ENCODE measurements at regions of chr6 and their contacts with region 1.

Region 1: DNA sequence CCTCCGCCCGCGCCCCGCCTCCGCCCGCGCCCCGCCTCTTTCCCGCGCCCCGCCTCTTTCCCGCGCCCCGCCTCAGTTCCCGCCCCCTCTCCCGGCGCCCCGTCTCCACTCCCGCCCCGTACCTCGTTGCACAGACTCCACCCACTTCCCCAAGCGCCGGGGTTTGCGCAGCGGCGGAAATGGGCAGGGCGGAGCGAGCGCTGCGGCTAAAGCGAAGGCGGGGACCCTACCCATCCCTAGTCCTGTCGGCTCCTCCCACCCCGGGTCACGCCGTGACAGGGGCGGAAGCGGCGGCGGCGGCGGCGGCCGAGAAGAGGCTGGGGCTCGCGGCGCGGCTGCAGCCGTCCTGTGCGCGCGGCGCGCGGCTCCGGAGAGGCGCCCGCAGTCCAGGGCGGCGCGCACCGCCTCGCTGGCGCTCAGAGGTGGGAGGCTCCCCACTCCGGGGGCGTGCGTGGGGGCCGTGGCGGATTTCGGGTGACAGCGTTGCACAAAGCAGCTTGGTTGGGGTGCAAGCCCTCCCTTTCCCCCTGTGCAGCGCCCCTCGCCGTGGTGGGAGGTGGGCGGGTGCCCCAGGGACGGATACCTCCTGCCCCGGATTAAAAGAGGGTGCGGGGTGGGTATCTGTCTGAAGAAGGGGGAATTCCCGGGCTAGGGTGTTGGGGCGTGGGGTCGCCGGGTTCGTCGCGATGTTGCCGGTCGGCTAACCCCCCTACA is at the start of gene KDM1B:
- DNase-seq: peak; percentile 98
- H3K4me3 ChIP-seq: peak within 1 kb of the TSS; percentile 98
- H3K4me3 Mint-ChIP-seq: peak within 1 kb of the TSS; percentile 99
- H3K27ac Mint-ChIP-seq: peak within 1 kb of the TSS; percentile 99
- H3K4me1 ChIP-seq: no peaks in the 10 kb centered on the region
- H3K4me1 Mint-ChIP-seq: no peaks in the 10 kb centered on the region
- H3K27me3 ChIP-seq: no peaks in the 10 kb centered on the region
- H3K27me3 Mint-ChIP-seq: no peaks in the 10 kb centered on the region
- CTCF ChIP-seq: no peak
- total RNA-seq, gene KDM1B: 9.5 and 10.6 TPM in 2 replicates

Region 2: DNA sequence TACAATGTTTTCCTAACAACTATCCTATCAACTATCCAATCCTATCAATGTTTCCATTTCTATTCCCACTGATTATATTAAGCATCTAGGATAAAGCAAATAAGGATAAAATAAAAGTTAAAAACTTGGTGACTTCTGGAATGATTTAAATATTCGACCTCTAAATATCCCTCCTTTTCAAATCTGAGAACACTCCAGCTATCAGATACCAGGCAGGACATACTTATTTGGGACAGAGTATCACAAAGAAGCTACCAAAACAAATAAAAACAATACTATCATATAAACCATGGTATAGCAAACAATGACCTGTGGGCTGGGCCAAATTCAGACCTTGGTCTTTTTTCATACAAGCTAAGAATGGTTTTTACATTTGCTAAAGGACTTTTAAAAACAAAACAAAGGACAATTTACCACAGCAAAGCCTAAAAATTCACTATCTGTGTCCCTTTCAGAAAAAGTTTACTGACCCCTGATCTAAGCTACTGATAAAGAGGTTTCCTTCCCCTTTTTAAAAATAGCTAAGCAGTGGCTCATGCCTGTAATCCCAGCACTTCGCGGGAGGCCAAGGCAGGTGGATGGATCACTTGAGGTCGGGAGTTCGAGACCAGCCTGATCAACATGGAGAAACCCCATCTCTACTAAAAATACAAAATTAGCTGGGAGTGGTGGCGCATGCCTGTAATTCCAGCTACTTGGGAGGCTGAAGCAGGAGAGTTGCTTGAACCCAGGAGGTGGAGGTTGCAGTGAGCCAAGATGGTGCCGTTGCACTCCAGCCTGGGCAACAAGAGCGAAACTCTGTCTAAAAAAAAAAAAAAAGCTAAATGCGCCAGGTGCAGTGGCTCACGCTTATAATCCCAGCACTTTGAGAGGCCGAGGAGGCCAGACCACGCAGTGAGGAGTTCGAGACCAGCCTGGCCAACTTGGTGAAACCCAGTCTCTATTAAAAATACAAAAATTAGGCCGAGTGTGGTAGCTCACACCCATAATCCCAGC is 454.6 kb before region 1 on chr6:
- CTCF ChIA-PET with region 1: no interaction called
- POLR2A ChIA-PET with region 1: no interaction called
- intact Hi-C with region 1: no loop called
- DNase-seq: no peak
- H3K4me3 ChIP-seq: no peak overlapping the region
- H3K4me3 Mint-ChIP-seq: no peak overlapping the region
- H3K27ac Mint-ChIP-seq: no peak overlapping the region
- H3K4me1 ChIP-seq: peaks cover 19% of the 10 kb centered on the region
- H3K4me1 Mint-ChIP-seq: no peaks in the 10 kb centered on the region
- H3K27me3 ChIP-seq: no peaks in the 10 kb centered on the region
- H3K27me3 Mint-ChIP-seq: no peaks in the 10 kb centered on the region
- CTCF ChIP-seq: no peak

Region 3: DNA sequence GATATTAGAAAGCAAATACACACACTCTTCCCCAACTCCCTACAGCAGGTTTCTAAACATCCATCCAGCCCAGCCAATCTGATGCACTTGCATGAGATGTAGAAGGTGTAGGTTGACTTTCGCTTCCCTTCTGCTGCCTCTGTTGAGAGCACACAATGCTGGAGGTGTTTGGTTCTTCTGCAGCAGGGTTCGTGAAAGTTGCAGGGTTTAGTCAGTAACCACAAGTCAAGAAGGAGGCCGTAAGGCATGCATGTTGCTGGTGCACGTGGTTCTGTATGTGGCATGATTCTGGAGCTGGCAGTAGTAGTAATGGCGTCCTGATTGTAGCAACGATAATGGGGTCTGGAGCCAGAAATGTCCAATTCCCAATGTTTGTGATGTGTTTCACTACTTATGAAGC is 56.0 kb after region 1 on chr6:
- CTCF ChIA-PET with region 1: no interaction called
- POLR2A ChIA-PET with region 1: no interaction called
- intact Hi-C with region 1: no loop called
- DNase-seq: no peak
- H3K4me3 ChIP-seq: no peak overlapping the region
- H3K4me3 Mint-ChIP-seq: no peak overlapping the region
- H3K27ac Mint-ChIP-seq: no peak overlapping the region
- H3K4me1 ChIP-seq: no peaks in the 10 kb centered on the region
- H3K4me1 Mint-ChIP-seq: no peaks in the 10 kb centered on the region
- H3K27me3 ChIP-seq: no peaks in the 10 kb centered on the region
- H3K27me3 Mint-ChIP-seq: no peaks in the 10 kb centered on the region
- CTCF ChIP-seq: no peak

Region 4: GRCh38 chr6:18242062-18242851 is 87.0 kb after region 1 on chr6:
- CTCF ChIA-PET with region 1: no interaction called
- POLR2A ChIA-PET with region 1: no interaction called
- intact Hi-C with region 1: loop called (anchors 5 kb)
- DNase-seq: no peak
- H3K4me3 ChIP-seq: no peak overlapping the region
- H3K4me3 Mint-ChIP-seq: no peak overlapping the region
- H3K27ac Mint-ChIP-seq: peak overlapping the region; percentile 45
- H3K4me1 ChIP-seq: no peaks in the 10 kb centered on the region
- H3K4me1 Mint-ChIP-seq: no peaks in the 10 kb centered on the region
- H3K27me3 ChIP-seq: no peaks in the 10 kb centered on the region
- H3K27me3 Mint-ChIP-seq: no peaks in the 10 kb centered on the region
- CTCF ChIP-seq: no peak

Region 5: GRCh38 chr6:18264219-18264922 is 109.1 kb after region 1 on chr6 and contains the start of gene DEK:
- CTCF ChIA-PET with region 1: no interaction called
- POLR2A ChIA-PET with region 1: no interaction called
- intact Hi-C with region 1: loop called (anchors 5 kb)
- DNase-seq: peak; percentile 90 to 91
- H3K4me3 ChIP-seq: peak within 1 kb of the TSS; percentile 95
- H3K4me3 Mint-ChIP-seq: peak within 1 kb of the TSS; percentile 95
- H3K27ac Mint-ChIP-seq: peak within 1 kb of the TSS; percentile 93
- H3K4me1 ChIP-seq: peaks cover 12% of the 10 kb centered on the region
- H3K4me1 Mint-ChIP-seq: peaks cover 8% of the 10 kb centered on the region
- H3K27me3 ChIP-seq: no peaks in the 10 kb centered on the region
- H3K27me3 Mint-ChIP-seq: no peaks in the 10 kb centered on the region
- CTCF ChIP-seq: peak; percentile 23 to 36
- total RNA-seq, gene DEK: 170 and 171 TPM in 2 replicates

Region 6: GRCh38 chr6:18752278-18753068 is 597.2 kb after region 1 on chr6:
- CTCF ChIA-PET with region 1: no interaction called
- POLR2A ChIA-PET with region 1: no interaction called
- intact Hi-C with region 1: no loop called
- DNase-seq: no peak
- H3K4me3 ChIP-seq: no peak overlapping the region
- H3K4me3 Mint-ChIP-seq: no peak overlapping the region
- H3K27ac Mint-ChIP-seq: no peak overlapping the region
- H3K4me1 ChIP-seq: no peaks in the 10 kb centered on the region
- H3K4me1 Mint-ChIP-seq: peaks cover 7% of the 10 kb centered on the region
- H3K27me3 ChIP-seq: no peaks in the 10 kb centered on the region
- H3K27me3 Mint-ChIP-seq: peaks cover 18% of the 10 kb centered on the region
- CTCF ChIP-seq: no peak

Measured in Caco-2 (cell line).